ENCODE measurements at regions of chr18 and their contacts with region 1.

Region 1: GRCh38 chr18:10851824-10852319 is 297.5 kb downstream of the PIEZO2 start:
- DNase-seq: peak; percentile 61
- ATAC-seq: peak; percentile 80
- H3K4me3 ChIP-seq: no peak overlapping the region
- H3K27ac ChIP-seq: peak overlapping the region; percentile 69
- H3K4me1 ChIP-seq: peaks cover 28% of the 10 kb centered on the region; the same call in 1 of the 2 replicates
- H3K27me3 ChIP-seq: no peaks in the 10 kb centered on the region
- CTCF ChIP-seq: peak; percentile 57 to 83 (median 61); a peak in 5 of 6 replicates
- EP300 ChIP-seq: no peak
- POLR2A ChIP-seq: no peak
- RAD21 ChIP-seq: peak; percentile 96

Region 2: GRCh38 chr18:10536280-10536679 is 315.6 kb before region 1 on chr18:
- CTCF ChIA-PET with region 1: no interaction called
- POLR2A ChIA-PET with region 1: no interaction called
- RAD21 ChIA-PET with region 1: no interaction called
- SMC1A ChIA-PET with region 1: no interaction called
- in situ Hi-C with region 1: no loop called
- intact Hi-C with region 1: no loop called
- DNase-seq: no peak
- ATAC-seq: no peak
- H3K4me3 ChIP-seq: no peak overlapping the region
- H3K27ac ChIP-seq: no peak overlapping the region
- H3K4me1 ChIP-seq: no peaks in the 10 kb centered on the region
- H3K27me3 ChIP-seq: no peaks in the 10 kb centered on the region
- CTCF ChIP-seq: no peak
- EP300 ChIP-seq: no peak
- POLR2A ChIP-seq: no peak
- RAD21 ChIP-seq: no peak

Region 3: DNA sequence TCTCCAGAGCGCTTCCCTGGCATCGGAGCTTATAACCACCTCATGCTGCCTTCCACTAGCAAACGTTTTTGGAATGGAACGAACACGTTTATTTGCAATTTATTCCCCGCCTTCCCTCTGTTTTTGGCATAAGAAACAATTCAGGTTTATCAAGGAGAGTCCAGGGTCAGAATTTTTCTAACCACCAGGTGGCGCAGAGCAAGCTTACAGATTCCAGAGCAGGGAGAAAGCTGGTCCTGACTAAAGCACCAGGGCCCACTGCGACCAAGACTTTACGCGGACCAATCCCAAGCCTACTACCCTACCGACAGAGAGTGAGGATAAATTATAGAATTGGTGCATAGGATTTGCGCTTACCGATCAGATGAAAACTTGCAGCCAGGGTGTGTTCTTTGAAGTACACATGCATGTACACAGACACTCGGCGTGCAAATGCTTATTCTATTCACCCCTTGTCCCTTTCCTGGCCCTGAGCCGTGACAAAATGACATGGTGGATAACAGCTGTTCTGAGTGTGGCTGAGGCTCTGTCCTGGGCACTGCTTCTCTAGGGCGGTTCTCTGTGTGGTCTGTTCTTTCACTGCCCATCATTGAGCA is 291.3 kb before region 1 on chr18:
- CTCF ChIA-PET with region 1: interaction called, 11 read pairs
- POLR2A ChIA-PET with region 1: no interaction called
- RAD21 ChIA-PET with region 1: interaction called, 8 read pairs
- SMC1A ChIA-PET with region 1: interaction called, 7 read pairs
- in situ Hi-C with region 1: no loop called
- intact Hi-C with region 1: no loop called
- DNase-seq: peak; percentile 48
- ATAC-seq: peak; percentile 90
- H3K4me3 ChIP-seq: peak overlapping the region; percentile 21; the same call in 1 of the 2 replicates
- H3K27ac ChIP-seq: peak overlapping the region; percentile 66
- H3K4me1 ChIP-seq: peaks cover 5% of the 10 kb centered on the region
- H3K27me3 ChIP-seq: no peaks in the 10 kb centered on the region
- CTCF ChIP-seq: peak; percentile 69 to 80 (median 78)
- EP300 ChIP-seq: no peak
- POLR2A ChIP-seq: no peak
- RAD21 ChIP-seq: peak; percentile 89

Region 4: GRCh38 chr18:10872304-10872703 is 20.4 kb after region 1 on chr18:
- CTCF ChIA-PET with region 1: interaction called, 35 read pairs
- POLR2A ChIA-PET with region 1: interaction called, 3 read pairs
- RAD21 ChIA-PET with region 1: interaction called, 25 read pairs
- SMC1A ChIA-PET with region 1: interaction called, 35 read pairs
- in situ Hi-C with region 1: no loop called
- intact Hi-C with region 1: no loop called
- DNase-seq: no peak
- ATAC-seq: no peak; the same call in 2 of the 3 replicates
- H3K4me3 ChIP-seq: no peak overlapping the region
- H3K27ac ChIP-seq: peak overlapping the region; percentile 28; the same call in 1 of the 2 replicates
- H3K4me1 ChIP-seq: peaks cover 25% of the 10 kb centered on the region
- H3K27me3 ChIP-seq: no peaks in the 10 kb centered on the region
- CTCF ChIP-seq: no peak
- EP300 ChIP-seq: no peak
- POLR2A ChIP-seq: no peak
- RAD21 ChIP-seq: no peak

Region 5: DNA sequence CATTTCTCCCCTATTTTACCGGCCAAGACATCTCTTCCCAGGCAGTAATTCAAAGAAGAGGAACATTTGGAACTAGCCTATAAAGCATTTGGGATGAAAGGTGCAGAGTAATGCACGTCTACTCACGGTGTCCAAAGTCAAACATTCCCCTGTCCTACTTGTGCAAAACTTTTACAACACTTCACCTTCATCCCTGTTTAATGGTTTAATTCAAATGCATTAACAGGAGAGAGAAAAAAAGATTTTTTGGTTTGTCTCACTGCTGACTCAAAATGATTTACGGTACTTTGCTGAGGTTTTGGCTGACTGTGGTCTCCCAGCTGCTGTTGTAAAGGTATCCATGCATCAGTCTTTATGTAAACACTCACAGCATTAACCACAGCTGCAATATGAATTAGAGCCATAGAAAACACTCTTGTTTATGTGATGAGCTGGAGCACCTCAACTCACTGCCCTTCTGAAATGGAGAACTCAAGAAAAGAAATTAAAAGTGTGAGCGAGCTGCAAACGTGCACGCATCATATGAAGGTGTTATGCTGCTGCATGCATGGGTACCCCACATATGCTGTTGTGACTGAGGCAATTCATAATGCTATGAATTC is 77.0 kb after region 1 on chr18:
- CTCF ChIA-PET with region 1: interaction called, 13 read pairs
- POLR2A ChIA-PET with region 1: no interaction called
- RAD21 ChIA-PET with region 1: interaction called, 12 read pairs
- SMC1A ChIA-PET with region 1: interaction called, 12 read pairs
- in situ Hi-C with region 1: no loop called
- intact Hi-C with region 1: no loop called
- DNase-seq: peak; percentile 87
- ATAC-seq: peak; percentile 76
- H3K4me3 ChIP-seq: peak overlapping the region; percentile 48; the same call in 1 of the 2 replicates
- H3K27ac ChIP-seq: peak overlapping the region; percentile 96
- H3K4me1 ChIP-seq: peaks cover 37% of the 10 kb centered on the region
- H3K27me3 ChIP-seq: no peaks in the 10 kb centered on the region
- CTCF ChIP-seq: no peak
- EP300 ChIP-seq: peak; percentile 96 to 97
- POLR2A ChIP-seq: no peak
- RAD21 ChIP-seq: peak; percentile 24; the same call in 1 of the 2 replicates

Region 6: DNA sequence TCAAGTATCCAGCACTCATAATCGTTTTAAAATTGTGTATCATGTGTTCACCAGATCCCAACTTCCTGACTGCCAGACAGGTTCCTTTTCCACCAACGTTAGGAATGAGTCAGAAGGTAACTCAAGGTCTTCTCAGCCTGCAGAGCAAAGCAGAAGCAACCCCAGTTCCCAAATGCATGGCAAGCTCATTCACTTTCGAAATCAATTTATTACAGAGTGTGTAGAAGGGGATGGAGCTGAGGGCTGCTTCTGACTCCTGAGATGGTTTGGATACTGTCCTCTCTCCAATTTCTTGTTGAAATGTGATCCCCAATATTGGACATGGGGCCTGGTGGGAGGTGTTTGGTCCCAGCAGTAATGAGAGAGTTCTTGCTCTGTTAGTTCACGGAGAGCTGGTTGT is 183.0 kb after region 1 on chr18:
- CTCF ChIA-PET with region 1: interaction called, 192 read pairs
- POLR2A ChIA-PET with region 1: interaction called, 4 read pairs
- RAD21 ChIA-PET with region 1: interaction called, 157 read pairs
- SMC1A ChIA-PET with region 1: interaction called, 196 read pairs
- in situ Hi-C with region 1: loop called (anchors 5 kb)
- intact Hi-C with region 1: no loop called
- DNase-seq: no peak
- ATAC-seq: peak; percentile 83
- H3K4me3 ChIP-seq: peak overlapping the region; percentile 6; the same call in 1 of the 2 replicates
- H3K27ac ChIP-seq: peak overlapping the region; percentile 52
- H3K4me1 ChIP-seq: peaks cover 38% of the 10 kb centered on the region
- H3K27me3 ChIP-seq: no peaks in the 10 kb centered on the region
- CTCF ChIP-seq: no peak
- EP300 ChIP-seq: no peak
- POLR2A ChIP-seq: no peak
- RAD21 ChIP-seq: no peak

Region 7: GRCh38 chr18:11163665-11164064 is 311.8 kb after region 1 on chr18:
- CTCF ChIA-PET with region 1: interaction called, 225 read pairs
- POLR2A ChIA-PET with region 1: no interaction called
- RAD21 ChIA-PET with region 1: interaction called, 17 read pairs
- SMC1A ChIA-PET with region 1: interaction called, 256 read pairs
- in situ Hi-C with region 1: no loop called
- intact Hi-C with region 1: no loop called
- DNase-seq: no peak
- ATAC-seq: peak; percentile 94
- H3K4me3 ChIP-seq: no peak overlapping the region
- H3K27ac ChIP-seq: no peak overlapping the region
- H3K4me1 ChIP-seq: peaks cover 9% of the 10 kb centered on the region
- H3K27me3 ChIP-seq: no peaks in the 10 kb centered on the region
- CTCF ChIP-seq: peak; percentile 61 to 88 (median 62)
- EP300 ChIP-seq: no peak
- POLR2A ChIP-seq: no peak
- RAD21 ChIP-seq: peak; percentile 25; the same call in 1 of the 2 replicates

Measured in GM12878 (cell line).